Activated CD4-positive, alpha-beta memory T cell treated with anti-CD3 and anti-CD28 coated beads for 36 hours (primary cell): ENCODE measurements at regions of chr17 and their contacts with region 1.

Region 1: DNA sequence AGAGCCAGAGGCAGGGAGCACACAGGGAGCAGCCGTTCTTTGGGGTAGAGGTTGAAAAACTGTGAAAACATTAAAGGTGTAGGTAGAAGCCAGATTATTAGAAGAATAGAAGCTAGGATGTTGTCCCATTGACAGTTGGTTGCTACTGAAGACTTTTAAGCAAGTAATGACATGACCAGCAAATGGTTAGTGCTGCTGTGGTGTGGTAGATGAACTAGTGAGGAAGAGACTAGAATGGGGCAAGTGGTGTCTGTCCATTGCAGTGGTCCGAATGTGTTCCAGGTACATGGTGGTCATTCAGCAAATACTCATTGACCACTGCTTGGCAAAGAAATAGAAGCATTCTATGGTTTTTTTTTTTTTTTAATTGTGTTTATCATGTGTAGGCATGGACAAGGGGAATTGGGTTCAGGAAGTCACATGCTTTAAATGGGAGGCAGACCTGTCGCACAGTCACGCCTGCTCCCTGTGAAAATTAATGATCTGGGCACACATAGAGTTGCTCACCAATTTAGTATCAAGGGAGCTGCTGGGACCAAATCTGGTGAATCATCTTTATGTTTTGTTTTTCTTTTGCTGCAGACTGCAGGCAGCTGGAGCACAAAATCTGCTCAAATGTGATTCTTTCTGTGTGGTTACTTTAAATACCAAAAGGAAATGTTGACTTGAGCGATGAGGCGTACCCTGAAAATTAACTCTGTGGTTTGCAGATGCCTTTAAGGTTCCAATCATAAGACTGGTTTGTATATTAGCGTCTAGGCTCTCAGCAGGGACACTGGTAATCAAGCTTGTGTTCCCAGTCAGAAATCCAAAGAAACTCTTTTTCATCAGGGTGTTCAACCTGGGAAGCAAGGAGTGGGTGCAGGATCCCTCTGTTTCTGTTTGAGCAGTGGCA is 30.7 kb downstream of the YPEL2 start:
- DNase-seq: peak; percentile 60
- H3K4me3 Mint-ChIP-seq: peak overlapping the region; percentile 21
- H3K27ac Mint-ChIP-seq: peak overlapping the region; percentile 83
- H3K4me1 Mint-ChIP-seq: peaks cover 78% of the 10 kb centered on the region
- H3K27me3 Mint-ChIP-seq: no peaks in the 10 kb centered on the region

Region 2: DNA sequence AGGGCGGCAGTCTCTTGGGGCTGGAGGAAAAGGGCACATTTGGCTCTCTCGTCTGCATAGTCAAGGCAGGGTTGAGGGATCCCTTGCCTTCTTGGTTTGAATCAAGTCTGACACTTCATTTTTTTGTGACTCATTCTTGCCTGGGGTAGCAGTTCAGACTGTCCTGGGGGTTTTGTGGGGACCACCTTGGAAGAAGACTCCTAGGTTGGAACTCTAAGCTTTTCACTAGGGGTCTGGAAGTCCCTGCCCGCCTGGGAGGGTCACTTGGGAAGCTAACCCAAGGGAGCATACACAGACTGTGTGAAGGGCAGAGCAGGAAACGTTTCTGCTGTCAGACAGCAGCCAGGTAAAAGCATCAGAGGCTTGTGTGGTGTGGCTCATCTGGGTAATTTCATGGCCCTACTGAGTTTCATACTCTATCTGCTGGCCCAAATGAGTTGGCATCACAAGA is 19.5 kb before region 1 on chr17:
- CTCF ChIA-PET with region 1: interaction called, 5 read pairs
- POLR2A ChIA-PET with region 1: interaction called, 20 read pairs
- intact Hi-C with region 1: loop called (anchors 1 kb)
- DNase-seq: peak; percentile 66
- H3K4me3 Mint-ChIP-seq: no peak overlapping the region
- H3K27ac Mint-ChIP-seq: peak overlapping the region; percentile 80
- H3K4me1 Mint-ChIP-seq: peaks cover 54% of the 10 kb centered on the region
- H3K27me3 Mint-ChIP-seq: no peaks in the 10 kb centered on the region

Region 3: GRCh38 chr17:59427425-59427921 is 65.3 kb after region 1 on chr17:
- CTCF ChIA-PET with region 1: interaction called, 9 read pairs
- POLR2A ChIA-PET with region 1: interaction called, 15 read pairs
- intact Hi-C with region 1: loop called (anchors 2 kb)
- DNase-seq: peak; percentile 82
- H3K4me3 Mint-ChIP-seq: no peak overlapping the region
- H3K27ac Mint-ChIP-seq: no peak overlapping the region
- H3K4me1 Mint-ChIP-seq: peaks cover 33% of the 10 kb centered on the region
- H3K27me3 Mint-ChIP-seq: peaks cover under 1% of the 10 kb centered on the region

Region 4: DNA sequence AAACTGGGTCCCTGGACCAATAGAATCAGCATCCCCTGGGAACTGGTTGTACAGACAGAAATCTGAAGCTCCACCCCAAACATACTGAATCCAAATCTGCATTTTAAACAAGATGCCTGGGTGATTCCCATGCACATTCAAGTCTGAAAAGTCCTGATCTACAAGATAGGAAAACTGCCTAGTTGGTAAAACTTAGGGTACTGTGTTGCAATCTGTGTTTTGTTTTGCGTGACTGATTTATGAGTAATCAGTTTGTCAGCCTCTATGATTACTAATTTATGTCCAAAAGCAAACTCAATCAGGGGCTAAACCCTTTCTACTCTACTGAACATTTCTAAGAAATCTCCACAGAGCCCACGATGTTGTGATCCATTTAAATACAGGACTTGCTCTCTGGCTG is 73.1 kb after region 1 on chr17:
- CTCF ChIA-PET with region 1: interaction called, 8 read pairs
- POLR2A ChIA-PET with region 1: interaction called, 7 read pairs
- intact Hi-C with region 1: loop called (anchors 1 kb)
- DNase-seq: no peak
- H3K4me3 Mint-ChIP-seq: no peak overlapping the region
- H3K27ac Mint-ChIP-seq: peak overlapping the region; percentile 89
- H3K4me1 Mint-ChIP-seq: peaks cover 61% of the 10 kb centered on the region
- H3K27me3 Mint-ChIP-seq: peaks cover 6% of the 10 kb centered on the region

Region 5: DNA sequence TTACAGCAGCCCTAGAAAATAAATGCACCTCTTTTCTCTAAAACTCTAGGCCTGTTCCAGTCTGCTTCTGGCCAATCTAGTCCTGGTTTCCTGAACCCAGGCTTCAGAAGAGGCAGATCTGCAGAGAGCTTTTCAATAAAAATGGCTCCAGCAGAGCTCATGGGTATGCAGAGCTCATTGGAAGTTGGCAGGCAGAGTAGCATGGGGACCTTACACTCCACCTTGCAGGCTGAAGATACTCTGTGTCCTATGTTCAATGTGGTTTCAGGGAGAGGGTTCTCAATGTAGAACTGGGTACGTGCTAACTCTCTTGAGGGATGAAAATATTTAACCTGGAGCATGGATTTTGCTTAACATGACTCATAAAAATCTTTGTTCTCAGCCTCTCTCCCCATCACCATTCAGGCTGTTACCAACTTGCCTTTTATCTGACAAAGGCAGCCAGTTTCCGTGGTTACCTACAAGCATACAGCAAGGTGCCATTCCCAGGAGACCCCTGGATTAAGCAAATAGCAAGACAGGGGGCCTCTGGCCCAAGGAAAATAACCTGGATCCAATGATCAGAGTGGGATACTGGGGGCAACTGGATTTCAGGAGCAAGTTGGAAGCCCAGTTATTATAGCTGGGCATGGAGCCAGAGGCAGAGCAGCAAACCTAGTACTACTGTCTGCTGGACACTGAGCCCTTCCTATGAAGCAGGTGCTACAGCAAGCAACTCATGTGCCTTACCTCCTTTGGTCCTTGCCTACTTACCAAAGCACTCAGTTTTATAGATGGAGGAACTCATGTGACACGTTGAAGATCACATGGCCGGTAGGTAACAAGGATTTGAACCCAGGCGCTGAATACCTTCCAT is 105.0 kb after region 1 on chr17:
- CTCF ChIA-PET with region 1: no interaction called
- POLR2A ChIA-PET with region 1: no interaction called
- intact Hi-C with region 1: no loop called
- DNase-seq: no peak
- H3K4me3 Mint-ChIP-seq: no peak overlapping the region
- H3K27ac Mint-ChIP-seq: no peak overlapping the region
- H3K4me1 Mint-ChIP-seq: peaks cover 5% of the 10 kb centered on the region
- H3K27me3 Mint-ChIP-seq: no peaks in the 10 kb centered on the region

Region 6: GRCh38 chr17:59634632-59635541 is 272.7 kb after region 1 on chr17:
- CTCF ChIA-PET with region 1: no interaction called
- POLR2A ChIA-PET with region 1: no interaction called
- intact Hi-C with region 1: no loop called
- DNase-seq: no peak
- H3K4me3 Mint-ChIP-seq: peak overlapping the region; percentile 8
- H3K27ac Mint-ChIP-seq: peak overlapping the region; percentile 74
- H3K4me1 Mint-ChIP-seq: peaks cover 60% of the 10 kb centered on the region
- H3K27me3 Mint-ChIP-seq: no peaks in the 10 kb centered on the region

Region 7: DNA sequence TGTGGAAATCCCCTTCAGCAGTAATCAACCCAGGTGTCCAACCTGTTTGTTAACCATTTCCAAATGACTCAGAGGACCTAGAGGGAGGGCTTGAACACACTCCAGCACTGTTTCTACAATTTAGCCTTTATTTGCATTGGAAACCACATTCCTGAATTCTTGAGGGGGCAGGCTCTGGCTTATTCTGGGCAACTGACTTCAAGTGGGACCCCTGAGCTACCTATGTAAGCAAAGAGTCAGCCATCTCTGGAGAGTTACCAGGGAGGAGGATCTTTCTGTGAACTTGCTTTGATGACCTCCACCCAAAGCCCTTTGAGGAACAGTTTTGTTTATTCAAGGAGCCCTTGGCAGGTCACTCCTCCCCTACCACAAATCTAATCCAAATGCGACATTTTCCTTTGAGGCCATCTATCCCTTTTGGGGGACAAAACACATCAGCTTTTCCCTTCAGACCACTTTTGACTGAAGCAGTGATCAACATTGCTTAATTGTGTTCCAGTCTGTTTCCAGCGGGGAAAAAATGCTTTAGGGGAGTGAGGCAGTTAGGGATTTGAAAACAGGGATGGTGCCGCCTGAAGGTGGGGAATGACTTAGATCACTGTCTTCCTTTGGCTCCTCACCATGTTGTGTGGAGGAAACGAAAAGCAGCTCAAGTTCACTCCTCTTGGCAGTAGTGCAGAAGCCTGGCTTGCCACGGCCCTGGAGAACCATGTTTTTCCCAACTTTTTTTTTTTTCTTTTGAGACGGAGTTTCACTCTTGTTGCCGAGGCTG is 484.4 kb after region 1 on chr17:
- CTCF ChIA-PET with region 1: no interaction called
- POLR2A ChIA-PET with region 1: no interaction called
- intact Hi-C with region 1: loop called (anchors 10 kb)
- DNase-seq: peak; percentile 31
- H3K4me3 Mint-ChIP-seq: peak overlapping the region; percentile 60
- H3K27ac Mint-ChIP-seq: peak overlapping the region; percentile 100
- H3K4me1 Mint-ChIP-seq: peaks cover 68% of the 10 kb centered on the region
- H3K27me3 Mint-ChIP-seq: peaks cover 2% of the 10 kb centered on the region